ENCODE measurements at regions of chr3 and their contacts with region 1.

Region 1: GRCh38 chr3:45938864-45939263 is 4.4 kb upstream of the CXCR6 start:
- DNase-seq: peak; percentile 86 to 90 (median 88)
- ATAC-seq: peak; percentile 80
- H3K4me3 ChIP-seq: no peak overlapping the region
- H3K27ac ChIP-seq: no peak overlapping the region
- H3K4me1 ChIP-seq: no peaks in the 10 kb centered on the region
- H3K27me3 ChIP-seq: no peaks in the 10 kb centered on the region
- CTCF ChIP-seq: peak; percentile 80 to 91 (median 88)
- POLR2A ChIP-seq: no peak

Region 2: GRCh38 chr3:45751537-45752242 is 187.2 kb before region 1 on chr3:
- intact Hi-C with region 1: loop called (anchors 10 kb)
- DNase-seq: no peak
- ATAC-seq: no peak
- H3K4me3 ChIP-seq: no peak overlapping the region
- H3K27ac ChIP-seq: no peak overlapping the region
- H3K4me1 ChIP-seq: no peaks in the 10 kb centered on the region
- H3K27me3 ChIP-seq: no peaks in the 10 kb centered on the region
- CTCF ChIP-seq: no peak
- POLR2A ChIP-seq: no peak

Region 3: GRCh38 chr3:45841757-45842491 is 96.9 kb before region 1 on chr3 and contains the start of gene LZTFL1:
- intact Hi-C with region 1: no loop called
- DNase-seq: peak; percentile 94 to 97 (median 94)
- ATAC-seq: peak; percentile 99
- H3K4me3 ChIP-seq: peak within 1 kb of the TSS; percentile 28 to 99
- H3K27ac ChIP-seq: peak within 1 kb of the TSS in 2 of 4 donors; percentile 68 to 78
- H3K4me1 ChIP-seq: peaks cover 22% of the 10 kb centered on the region
- H3K27me3 ChIP-seq: no peaks in the 10 kb centered on the region
- CTCF ChIP-seq: peak in 1 of 7 experiments; percentile 15
- POLR2A ChIP-seq: peak in 2 of 3 donors; percentile 50
- total RNA-seq, gene LZTFL1: 12.5 to 14.5 TPM

Region 4: GRCh38 chr3:46078712-46079400 is 140.0 kb after region 1 on chr3:
- intact Hi-C with region 1: loop called (anchors 5 kb)
- DNase-seq: peak; percentile 93 to 97 (median 94)
- ATAC-seq: peak; percentile 96
- H3K4me3 ChIP-seq: no peak overlapping the region
- H3K27ac ChIP-seq: no peak overlapping the region
- H3K4me1 ChIP-seq: peaks cover 4% of the 10 kb centered on the region
- H3K27me3 ChIP-seq: no peaks in the 10 kb centered on the region
- CTCF ChIP-seq: peak; percentile 87 to 100 (median 99)
- POLR2A ChIP-seq: no peak

Measured in body of pancreas (tissue), 4 donors.